CD4-positive, alpha-beta T cell (primary cell): ENCODE measurements at regions of chr15 and their contacts with region 1.

Region 1: DNA sequence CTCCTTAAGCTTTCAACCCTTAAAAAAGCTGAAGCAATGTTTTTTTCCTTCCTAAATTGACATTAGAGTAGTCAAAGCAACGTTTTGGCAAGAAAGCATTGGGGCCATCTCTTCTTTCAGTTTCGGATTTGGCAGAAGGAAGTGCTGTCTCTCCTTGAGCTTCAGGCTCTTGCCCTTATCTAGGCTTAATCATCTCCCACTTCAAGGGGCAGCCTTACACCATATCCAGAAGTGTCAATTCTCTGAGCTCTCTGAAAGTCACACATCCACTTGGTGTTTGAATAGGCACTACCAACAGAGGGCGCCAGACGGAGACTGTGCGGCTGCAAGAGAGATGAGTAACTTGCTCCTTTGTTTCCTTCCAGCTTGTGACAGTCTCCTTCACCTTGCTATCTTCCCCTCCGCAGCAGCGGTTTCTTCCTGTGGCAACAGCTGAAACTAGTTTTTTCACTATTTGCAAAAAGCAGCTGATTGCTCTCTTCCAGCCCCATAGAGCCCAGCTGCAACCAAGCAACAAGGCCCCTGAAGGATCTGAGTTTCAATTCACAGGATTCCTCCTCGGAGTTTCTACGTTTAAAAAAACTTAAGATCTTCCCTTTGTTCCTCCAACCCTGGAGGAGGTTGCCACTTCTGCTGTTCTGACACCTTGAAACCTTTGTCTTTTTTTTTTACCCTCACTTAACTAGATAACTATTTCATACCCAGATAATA is 147.0 kb upstream of the SLCO3A1 start:
- DNase-seq: peak; percentile 61 to 92 (median 77)
- ATAC-seq: peak; percentile 94
- H3K4me3 ChIP-seq: no peak overlapping the region
- H3K4me3 Mint-ChIP-seq: peak overlapping the region; percentile 50
- H3K27ac ChIP-seq: peak overlapping the region in 1 of 2 donors; percentile 10
- H3K27ac Mint-ChIP-seq: peak overlapping the region; percentile 7
- H3K4me1 ChIP-seq: peaks cover 14% of the 10 kb centered on the region
- H3K4me1 Mint-ChIP-seq: peaks cover 18% of the 10 kb centered on the region
- H3K27me3 ChIP-seq: no peaks in the 10 kb centered on the region
- H3K27me3 Mint-ChIP-seq: no peaks in the 10 kb centered on the region
- CTCF ChIP-seq: peak; percentile 82

Region 2: DNA sequence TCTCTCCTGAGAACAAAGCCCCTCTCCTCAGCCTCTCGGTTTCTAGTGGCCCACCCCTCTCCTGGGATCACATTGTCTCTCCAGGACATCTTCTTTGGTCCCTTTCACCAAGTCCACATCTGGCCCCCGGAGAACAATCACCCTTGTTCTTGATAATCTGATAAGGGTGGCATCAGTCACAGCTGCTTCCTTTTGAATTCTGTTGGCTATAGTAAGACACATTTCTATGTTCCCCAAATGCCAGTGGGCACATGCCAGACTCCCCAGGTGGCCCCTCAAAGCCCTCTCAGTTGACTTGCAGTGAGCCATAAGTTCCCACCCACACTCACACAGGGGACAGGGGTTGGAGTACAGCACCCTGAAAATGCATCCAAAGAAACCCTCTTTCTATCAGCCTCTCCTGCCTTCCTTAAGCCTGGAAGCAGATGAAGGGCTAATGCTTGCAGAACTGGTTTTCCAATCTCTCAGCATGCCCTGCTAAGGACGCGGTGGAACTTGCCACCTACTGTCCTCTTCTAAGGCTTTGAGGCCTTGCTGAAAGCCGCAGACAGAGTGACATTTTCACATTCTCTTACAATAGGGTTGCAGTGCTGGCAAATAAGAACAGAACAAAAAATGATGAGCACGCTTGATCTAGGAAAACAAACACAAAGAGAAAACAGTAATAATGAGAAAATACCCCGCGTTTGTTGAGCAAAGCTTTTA is 45.8 kb after region 1 on chr15:
- CTCF ChIA-PET with region 1: no interaction called
- POLR2A ChIA-PET with region 1: no interaction called
- intact Hi-C with region 1: loop called in 1 of 2 experiments (anchors 5 kb)
- DNase-seq: no peak
- ATAC-seq: no peak
- H3K4me3 ChIP-seq: no peak overlapping the region
- H3K4me3 Mint-ChIP-seq: no peak overlapping the region
- H3K27ac ChIP-seq: no peak overlapping the region
- H3K27ac Mint-ChIP-seq: no peak overlapping the region
- H3K4me1 ChIP-seq: no peaks in the 10 kb centered on the region
- H3K4me1 Mint-ChIP-seq: no peaks in the 10 kb centered on the region
- H3K27me3 ChIP-seq: no peaks in the 10 kb centered on the region
- H3K27me3 Mint-ChIP-seq: peaks cover 11% of the 10 kb centered on the region
- CTCF ChIP-seq: no peak

Region 3: GRCh38 chr15:91801836-91802534 is 95.5 kb after region 1 on chr15:
- CTCF ChIA-PET with region 1: no interaction called
- POLR2A ChIA-PET with region 1: no interaction called
- intact Hi-C with region 1: loop called in 1 of 2 experiments (anchors 10 kb)
- DNase-seq: no peak
- ATAC-seq: no peak
- H3K4me3 ChIP-seq: no peak overlapping the region
- H3K4me3 Mint-ChIP-seq: no peak overlapping the region
- H3K27ac ChIP-seq: no peak overlapping the region
- H3K27ac Mint-ChIP-seq: no peak overlapping the region
- H3K4me1 ChIP-seq: no peaks in the 10 kb centered on the region
- H3K4me1 Mint-ChIP-seq: no peaks in the 10 kb centered on the region
- H3K27me3 ChIP-seq: peaks cover 0 to 5% of the 10 kb centered on the region in 2 experiments
- H3K27me3 Mint-ChIP-seq: peaks cover 39% of the 10 kb centered on the region
- CTCF ChIP-seq: no peak

Region 4: DNA sequence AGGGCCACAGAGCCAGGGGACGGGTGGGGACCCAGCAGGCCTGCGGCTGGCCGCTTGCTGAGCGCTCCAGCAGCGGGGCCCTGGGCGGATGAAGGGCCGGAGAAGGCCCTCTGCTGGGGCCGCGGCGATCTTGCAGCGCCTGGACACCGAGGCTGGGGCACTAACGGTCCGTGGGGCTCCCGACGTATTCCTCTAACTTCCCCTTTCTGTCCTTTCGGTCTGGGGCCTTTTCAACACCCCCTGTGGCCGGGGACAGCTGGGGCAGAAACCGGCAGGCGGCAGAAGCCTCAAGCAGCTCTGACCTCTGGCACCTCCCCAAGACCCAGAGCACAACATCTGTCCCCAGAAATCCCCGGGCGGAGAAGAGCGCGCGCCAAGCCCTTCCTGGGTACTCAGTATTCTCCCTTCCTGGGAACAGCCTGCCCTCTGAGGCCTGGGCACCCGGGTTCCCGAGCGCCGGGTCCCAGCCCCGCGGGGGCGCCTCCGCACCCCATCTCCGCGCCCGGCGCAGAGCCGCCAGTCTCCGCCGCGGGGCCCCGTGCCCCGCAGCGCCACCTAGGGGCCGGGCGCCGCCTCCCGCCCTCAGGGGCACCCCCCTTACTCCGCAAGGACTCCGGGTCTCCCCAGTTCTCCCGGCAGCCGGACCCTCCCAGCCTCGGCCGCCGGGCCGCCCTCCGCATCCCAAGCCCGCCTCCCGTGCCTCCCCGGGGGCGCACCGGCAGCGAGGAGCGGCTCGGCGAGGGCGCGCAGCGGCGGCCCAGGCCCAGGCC is 146.4 kb after region 1 on chr15:
- CTCF ChIA-PET with region 1: interaction called, 7 read pairs
- POLR2A ChIA-PET with region 1: no interaction called
- intact Hi-C with region 1: loop called in 1 of 2 experiments (anchors 5 kb)
- DNase-seq: peak; percentile 45 to 90 (median 72)
- ATAC-seq: peak; percentile 52
- H3K4me3 ChIP-seq: peak overlapping the region; percentile 73
- H3K4me3 Mint-ChIP-seq: peak overlapping the region; percentile 94
- H3K27ac ChIP-seq: peak overlapping the region; percentile 73
- H3K27ac Mint-ChIP-seq: peak overlapping the region; percentile 92
- H3K4me1 ChIP-seq: peaks cover 68% of the 10 kb centered on the region
- H3K4me1 Mint-ChIP-seq: peaks cover 72% of the 10 kb centered on the region
- H3K27me3 ChIP-seq: no peaks in the 10 kb centered on the region
- H3K27me3 Mint-ChIP-seq: no peaks in the 10 kb centered on the region
- CTCF ChIP-seq: peak; percentile 53

Region 5: GRCh38 chr15:91867581-91868026 is 161.1 kb after region 1 on chr15:
- CTCF ChIA-PET with region 1: interaction called, 4 read pairs
- POLR2A ChIA-PET with region 1: no interaction called
- intact Hi-C with region 1: loop called in 1 of 2 experiments (anchors 10 kb)
- DNase-seq: peak in 1 of 14 experiments; percentile 40
- ATAC-seq: peak; percentile 12
- H3K4me3 ChIP-seq: no peak overlapping the region
- H3K4me3 Mint-ChIP-seq: peak overlapping the region; percentile 35
- H3K27ac ChIP-seq: no peak overlapping the region
- H3K27ac Mint-ChIP-seq: no peak overlapping the region
- H3K4me1 ChIP-seq: peaks cover 74% of the 10 kb centered on the region
- H3K4me1 Mint-ChIP-seq: peaks cover 87% of the 10 kb centered on the region
- H3K27me3 ChIP-seq: no peaks in the 10 kb centered on the region
- H3K27me3 Mint-ChIP-seq: no peaks in the 10 kb centered on the region
- CTCF ChIP-seq: no peak

Region 6: GRCh38 chr15:91942676-91943576 is 236.4 kb after region 1 on chr15:
- CTCF ChIA-PET with region 1: interaction called, 14 read pairs
- POLR2A ChIA-PET with region 1: interaction called, 3 read pairs
- intact Hi-C with region 1: loop called (anchors 1 to 2 kb)
- DNase-seq: peak in 11 of 14 experiments; percentile 5 to 82 (median 16)
- ATAC-seq: peak; percentile 87
- H3K4me3 ChIP-seq: no peak overlapping the region
- H3K4me3 Mint-ChIP-seq: no peak overlapping the region
- H3K27ac ChIP-seq: peak overlapping the region in 1 of 2 donors; percentile 38
- H3K27ac Mint-ChIP-seq: peak overlapping the region; percentile 14
- H3K4me1 ChIP-seq: peaks cover 66% of the 10 kb centered on the region
- H3K4me1 Mint-ChIP-seq: peaks cover 87% of the 10 kb centered on the region
- H3K27me3 ChIP-seq: no peaks in the 10 kb centered on the region
- H3K27me3 Mint-ChIP-seq: no peaks in the 10 kb centered on the region
- CTCF ChIP-seq: no peak

Region 7: GRCh38 chr15:92077353-92078085 is 371.0 kb after region 1 on chr15:
- CTCF ChIA-PET with region 1: interaction called, 18 read pairs
- POLR2A ChIA-PET with region 1: no interaction called
- intact Hi-C with region 1: loop called (anchors 1 kb)
- DNase-seq: peak; percentile 36 to 75 (median 46)
- ATAC-seq: peak; percentile 73
- H3K4me3 ChIP-seq: no peak overlapping the region
- H3K4me3 Mint-ChIP-seq: no peak overlapping the region
- H3K27ac ChIP-seq: no peak overlapping the region
- H3K27ac Mint-ChIP-seq: no peak overlapping the region
- H3K4me1 ChIP-seq: peaks cover 34% of the 10 kb centered on the region
- H3K4me1 Mint-ChIP-seq: peaks cover 33% of the 10 kb centered on the region
- H3K27me3 ChIP-seq: no peaks in the 10 kb centered on the region
- H3K27me3 Mint-ChIP-seq: no peaks in the 10 kb centered on the region
- CTCF ChIP-seq: peak; percentile 64